ENCODE measurements at regions of chr10 and their contacts with region 1.

Region 1: DNA sequence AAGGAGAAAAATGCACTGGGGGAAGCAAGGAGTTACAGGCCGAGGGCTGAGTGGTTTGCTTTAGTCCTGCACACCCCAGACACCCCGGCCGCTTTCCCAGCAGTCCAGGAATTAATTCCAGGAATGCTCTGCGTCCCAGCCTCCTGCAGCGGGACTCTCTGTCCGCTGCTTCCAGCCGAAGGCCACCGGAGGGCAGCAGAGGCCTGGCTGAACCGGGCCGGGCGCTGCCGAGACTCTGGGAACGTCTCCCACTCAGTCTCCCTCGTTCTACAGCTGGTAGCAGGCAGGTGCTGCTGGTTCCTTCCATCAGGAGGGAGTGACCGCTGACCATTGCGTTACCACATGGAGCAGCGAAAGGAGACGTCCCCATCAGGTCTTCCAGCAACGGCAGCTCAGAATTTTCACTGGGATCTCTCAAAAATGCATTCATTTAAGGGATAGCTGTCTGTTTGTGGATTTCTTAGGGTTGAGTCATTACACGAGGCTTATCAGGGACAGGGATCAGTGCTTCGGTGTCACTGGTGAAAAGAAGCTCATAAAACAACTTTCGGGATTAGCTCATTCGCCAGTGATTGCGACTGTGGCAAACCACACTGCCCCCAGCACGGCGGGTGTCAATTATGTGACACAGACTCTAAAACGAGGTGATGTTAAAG is 24.9 kb upstream of the PITRM1 start:
- DNase-seq: peak; percentile 46 to 87 (median 53)
- H3K4me3 ChIP-seq: peak overlapping the region; percentile 24 to 49
- H3K4me3 Mint-ChIP-seq: peak overlapping the region; percentile 66 to 88 (median 77)
- H3K27ac ChIP-seq: no peak overlapping the region
- H3K27ac Mint-ChIP-seq: peak overlapping the region in 4 of 7 donors; percentile 11 to 81 (median 49)
- H3K4me1 ChIP-seq: peaks cover 18% of the 10 kb centered on the region
- H3K4me1 Mint-ChIP-seq: peaks cover 8 to 25% (median 13%) of the 10 kb centered on the region in 4 donors
- H3K27me3 ChIP-seq: peaks cover 7% of the 10 kb centered on the region
- H3K27me3 Mint-ChIP-seq: peaks cover 29 to 31% of the 10 kb centered on the region in 2 donors

Region 2: DNA sequence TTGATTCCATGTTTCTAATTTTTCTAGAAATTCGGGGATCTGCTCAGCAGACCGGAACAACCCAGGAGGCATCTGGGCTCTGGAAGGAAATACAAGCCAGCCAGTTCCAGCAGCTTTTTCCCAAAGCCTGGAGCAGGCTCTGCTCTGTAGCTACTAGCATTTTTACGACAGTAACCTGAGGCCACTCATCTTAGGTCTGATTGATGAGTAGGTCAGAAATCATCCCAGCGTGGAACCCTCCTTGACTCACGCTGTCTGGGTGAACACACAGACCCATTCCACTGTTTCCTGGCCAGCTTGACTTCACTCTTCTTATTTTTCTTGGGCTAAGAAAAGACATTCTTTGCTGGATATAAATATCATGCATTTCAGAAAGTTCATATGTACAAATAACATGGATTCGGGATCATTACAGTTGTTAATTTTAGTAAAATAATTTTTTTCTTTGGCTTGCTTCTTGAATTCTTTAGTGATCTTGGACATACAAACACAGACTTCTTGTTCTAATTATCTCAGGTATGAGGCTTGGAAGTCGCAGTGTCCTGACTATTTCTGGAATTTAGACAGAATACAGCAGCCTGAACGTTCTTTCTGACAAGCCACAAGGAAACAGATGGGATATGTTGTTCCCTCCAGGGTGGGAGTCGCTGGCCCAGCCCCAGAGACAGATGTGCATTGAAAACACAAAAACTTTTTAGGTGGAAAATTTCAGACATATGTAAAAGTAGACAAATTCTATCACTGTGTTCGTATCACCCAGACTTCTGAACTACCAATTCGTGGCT is 29.7 kb after region 1 on chr10:
- CTCF ChIA-PET with region 1: no interaction called
- POLR2A ChIA-PET with region 1: interaction called, 3 read pairs
- intact Hi-C with region 1: loop called (anchors 2 kb)
- DNase-seq: no peak
- H3K4me3 ChIP-seq: no peak overlapping the region
- H3K4me3 Mint-ChIP-seq: peak overlapping the region in 6 of 8 donors; percentile 6 to 67 (median 56)
- H3K27ac ChIP-seq: no peak overlapping the region
- H3K27ac Mint-ChIP-seq: peak overlapping the region in 4 of 7 donors; percentile 65 to 94 (median 86)
- H3K4me1 ChIP-seq: peaks cover 19% of the 10 kb centered on the region
- H3K4me1 Mint-ChIP-seq: peaks cover 0 to 20% (median 16%) of the 10 kb centered on the region in 4 donors
- H3K27me3 ChIP-seq: no peaks in the 10 kb centered on the region
- H3K27me3 Mint-ChIP-seq: no peaks in the 10 kb centered on the region

Region 3: GRCh38 chr10:4767033-4767814 is 1569.7 kb after region 1 on chr10:
- CTCF ChIA-PET with region 1: interaction called, 72 read pairs
- POLR2A ChIA-PET with region 1: no interaction called
- intact Hi-C with region 1: loop called (anchors 1 kb)
- DNase-seq: peak in 4 of 5 donors; percentile 18 to 33 (median 32)
- H3K4me3 ChIP-seq: no peak overlapping the region
- H3K4me3 Mint-ChIP-seq: no peak overlapping the region
- H3K27ac ChIP-seq: no peak overlapping the region
- H3K27ac Mint-ChIP-seq: no peak overlapping the region
- H3K4me1 ChIP-seq: no peaks in the 10 kb centered on the region
- H3K4me1 Mint-ChIP-seq: no peaks in the 10 kb centered on the region
- H3K27me3 ChIP-seq: no peaks in the 10 kb centered on the region
- H3K27me3 Mint-ChIP-seq: peaks cover 8 to 12% of the 10 kb centered on the region in 2 donors

Measured in CD4-positive, alpha-beta memory T cell (primary cell).